ENCODE measurements at regions of chr1 and their contacts with region 1.

Region 1: GRCh38 chr1:200488375-200489165 is 78.7 kb upstream of the ZNF281 start:
- DNase-seq: peak; percentile 55
- H3K4me3 ChIP-seq: no peak overlapping the region
- H3K27ac ChIP-seq: no peak overlapping the region
- H3K4me1 ChIP-seq: no peaks in the 10 kb centered on the region
- H3K27me3 ChIP-seq: no peaks in the 10 kb centered on the region
- CTCF ChIP-seq: peak; percentile 55 to 87 (median 83)
- POLR2A ChIP-seq: no peak

Region 2: GRCh38 chr1:199684686-199685273 is 803.8 kb before region 1 on chr1:
- intact Hi-C with region 1: loop called (anchors 10 kb)
- DNase-seq: peak; percentile 12
- H3K4me3 ChIP-seq: no peak overlapping the region
- H3K27ac ChIP-seq: no peak overlapping the region
- H3K4me1 ChIP-seq: no peaks in the 10 kb centered on the region
- H3K27me3 ChIP-seq: no peaks in the 10 kb centered on the region
- CTCF ChIP-seq: peak; percentile 9 to 63 (median 56)
- POLR2A ChIP-seq: no peak

Region 3: DNA sequence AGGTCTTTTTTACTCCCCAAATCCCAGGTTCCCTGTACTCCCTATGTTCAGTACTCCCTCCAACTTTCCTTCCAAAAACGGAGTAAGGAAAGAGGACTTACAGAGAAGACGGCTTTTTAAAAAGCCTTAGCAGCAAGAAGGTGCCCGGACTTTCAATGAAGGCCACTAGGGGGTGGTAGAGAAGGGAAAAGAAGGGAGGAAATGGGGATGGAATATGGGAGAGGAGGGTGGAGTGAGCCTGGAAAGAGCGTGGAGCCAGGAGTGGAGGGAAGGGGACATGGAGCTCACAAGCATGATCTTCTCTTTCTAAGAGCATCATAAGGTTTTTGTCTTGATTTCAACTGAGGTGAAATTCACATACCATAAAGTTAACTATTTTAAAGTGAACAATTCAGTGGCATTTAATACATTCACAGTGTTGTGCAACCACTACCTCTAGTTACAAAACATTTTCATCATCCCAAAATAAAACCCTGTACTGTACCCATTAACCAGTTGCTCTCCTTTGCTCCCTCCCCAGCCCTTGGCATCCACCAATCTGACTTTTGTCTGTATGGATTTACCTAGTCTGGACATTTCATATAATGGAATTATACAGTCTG is 208.7 kb before region 1 on chr1:
- intact Hi-C with region 1: loop called (anchors 5 kb)
- DNase-seq: peak; percentile 33
- H3K4me3 ChIP-seq: no peak overlapping the region
- H3K27ac ChIP-seq: no peak overlapping the region
- H3K4me1 ChIP-seq: no peaks in the 10 kb centered on the region
- H3K27me3 ChIP-seq: no peaks in the 10 kb centered on the region
- CTCF ChIP-seq: peak; percentile 36 to 66 (median 64)
- POLR2A ChIP-seq: no peak

Region 4: GRCh38 chr1:200642481-200642880 is 153.9 kb after region 1 on chr1:
- intact Hi-C with region 1: no loop called
- DNase-seq: no peak
- H3K4me3 ChIP-seq: no peak overlapping the region
- H3K27ac ChIP-seq: no peak overlapping the region
- H3K4me1 ChIP-seq: no peaks in the 10 kb centered on the region
- H3K27me3 ChIP-seq: no peaks in the 10 kb centered on the region
- CTCF ChIP-seq: no peak
- POLR2A ChIP-seq: no peak

Measured in prostate gland (tissue), 2 donors.